Spleen (tissue), 13 donors: ENCODE measurements at regions of chr5 and their contacts with region 1.

Region 1: DNA sequence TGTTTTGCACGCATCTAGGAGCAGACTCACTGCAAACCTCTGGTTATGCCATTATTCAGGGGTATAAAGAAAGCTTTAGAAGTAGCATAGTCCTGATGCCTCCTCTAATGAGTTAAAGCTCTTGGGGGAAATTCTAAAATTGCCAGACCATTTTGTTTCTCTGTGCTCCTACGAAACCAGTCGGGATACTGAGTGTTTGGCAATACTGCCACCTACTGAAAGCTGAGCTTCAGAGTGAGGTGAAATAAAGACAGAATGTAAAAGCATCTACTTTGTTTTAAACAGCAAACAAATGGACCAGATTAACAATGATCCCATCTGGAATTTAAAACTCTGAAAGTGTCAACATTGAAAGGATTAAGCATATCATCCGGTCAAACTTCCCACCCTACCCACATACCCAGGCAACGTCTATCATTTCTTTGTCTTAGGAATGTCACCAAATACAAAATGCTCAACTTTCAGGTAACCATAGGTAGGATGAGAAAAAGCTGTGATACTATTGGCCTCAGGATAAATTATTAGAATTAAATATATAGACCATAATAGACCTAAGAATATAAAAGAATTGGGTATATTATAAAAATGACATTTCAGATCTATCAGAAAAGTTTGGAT is 77.8 kb upstream of the SHISAL2B start:
- DNase-seq: no peak
- H3K4me3 ChIP-seq: no peak overlapping the region
- H3K27ac ChIP-seq: no peak overlapping the region
- H3K4me1 ChIP-seq: peaks cover 0 to 4% (median 0%) of the 10 kb centered on the region in 6 donors
- H3K27me3 ChIP-seq: peaks cover 0 to 11% (median 0%) of the 10 kb centered on the region in 7 donors
- CTCF ChIP-seq: peak in 7 of 11 experiments; percentile 31 to 51 (median 42)
- POLR2A ChIP-seq: no peak

Region 2: GRCh38 chr5:64147849-64148441 is 464.5 kb before region 1 on chr5:
- intact Hi-C with region 1: loop called (anchors 10 kb)
- DNase-seq: peak; percentile 69
- H3K4me3 ChIP-seq: no peak overlapping the region
- H3K27ac ChIP-seq: no peak overlapping the region
- H3K4me1 ChIP-seq: no peaks in the 10 kb centered on the region
- H3K27me3 ChIP-seq: no peaks in the 10 kb centered on the region
- CTCF ChIP-seq: peak in 8 of 11 experiments; percentile 25 to 67 (median 44)
- POLR2A ChIP-seq: no peak

Region 3: DNA sequence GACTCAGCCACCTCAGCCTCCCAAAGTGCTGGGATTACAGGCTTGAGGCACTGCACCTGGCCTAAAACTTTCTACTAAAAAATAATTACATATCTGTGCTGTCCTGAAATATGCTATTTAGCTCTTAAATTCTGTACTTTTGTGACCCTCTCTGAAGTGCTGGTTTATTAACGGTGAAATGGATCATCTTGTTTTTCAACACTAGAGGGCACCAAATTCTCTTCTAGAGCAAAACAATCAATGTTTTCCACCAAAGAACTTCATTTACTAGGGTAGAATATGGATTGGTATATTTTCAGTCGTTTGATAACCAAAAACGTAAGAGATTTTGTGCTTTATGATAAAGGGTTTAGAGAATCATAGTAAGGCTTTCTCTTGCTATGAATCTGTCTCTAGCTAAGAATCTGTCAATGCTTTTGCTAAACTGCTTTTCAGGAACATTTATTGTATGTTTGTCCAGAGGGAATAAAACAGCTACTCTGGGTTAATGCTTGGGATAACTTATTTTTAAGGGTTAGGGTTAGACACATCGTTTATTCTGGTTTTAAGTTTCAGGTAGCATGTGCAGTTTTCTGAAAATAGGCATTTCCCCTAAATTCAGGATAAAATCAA is 383.2 kb before region 1 on chr5:
- intact Hi-C with region 1: loop called (anchors 5 kb)
- DNase-seq: no peak
- H3K4me3 ChIP-seq: no peak overlapping the region
- H3K27ac ChIP-seq: no peak overlapping the region
- H3K4me1 ChIP-seq: no peaks in the 10 kb centered on the region
- H3K27me3 ChIP-seq: no peaks in the 10 kb centered on the region
- CTCF ChIP-seq: peak in 8 of 11 experiments; percentile 28 to 59 (median 48)
- POLR2A ChIP-seq: no peak